Activated CD4-positive, alpha-beta T cell treated with anti-CD3 and anti-CD28 coated beads, Interleukin-2, amount 10 ng/mL, durations not matched to agents 24 days and 14 days (primary cell): ENCODE measurements at regions of chr12 and their contacts with region 1.

Region 1: DNA sequence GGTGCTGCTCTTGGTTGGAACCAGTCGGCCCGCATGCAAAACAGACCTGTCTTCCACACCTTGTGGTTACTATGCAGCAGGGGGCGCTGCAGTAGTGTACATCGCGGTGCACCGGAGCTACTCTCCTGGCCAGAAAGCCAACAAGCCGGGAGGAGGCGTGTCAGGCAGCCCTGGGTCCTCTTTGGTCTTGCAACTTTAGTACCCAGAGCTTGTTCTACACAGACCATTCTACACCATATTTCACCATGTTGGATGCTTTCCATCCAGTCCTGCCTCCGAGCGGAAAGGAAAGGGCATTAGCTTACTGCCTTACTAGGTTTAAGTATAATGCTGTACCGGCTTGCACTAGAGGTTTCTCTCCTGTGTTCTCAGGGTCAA is 927 bp upstream of the TMTC2 start:
- DNase-seq: peak; percentile 97
- H3K4me3 Mint-ChIP-seq: peak overlapping the region; percentile 97
- H3K27ac Mint-ChIP-seq: peak overlapping the region; percentile 89
- H3K4me1 Mint-ChIP-seq: peaks cover 22% of the 10 kb centered on the region
- H3K27me3 Mint-ChIP-seq: peaks cover 24% of the 10 kb centered on the region

Region 2: DNA sequence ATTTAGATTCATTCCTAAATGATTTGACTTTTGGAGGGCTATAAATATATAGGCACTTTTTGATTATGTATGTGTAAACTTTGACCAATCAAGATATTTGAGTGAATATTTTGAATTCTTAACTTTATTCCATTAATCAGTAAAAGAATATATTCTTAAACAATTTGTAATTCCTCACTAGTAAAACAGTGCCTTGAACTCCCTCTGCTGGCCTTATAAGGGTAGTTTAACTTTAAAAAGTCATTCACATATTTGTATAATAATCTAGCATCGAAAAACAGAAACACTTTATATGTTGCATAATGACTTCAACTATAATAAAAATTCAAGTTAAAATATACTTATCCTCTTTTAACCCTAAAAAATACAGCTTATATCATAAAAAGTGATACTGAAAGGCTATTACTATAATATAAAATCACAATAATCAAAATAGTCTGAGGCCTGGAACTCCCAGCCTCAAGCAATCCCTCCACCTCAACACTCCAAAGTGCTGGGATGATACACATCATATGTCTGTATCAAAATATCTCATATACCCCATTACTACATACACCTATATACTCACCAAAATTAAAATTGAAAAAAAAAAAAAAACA is 358.8 kb before region 1 on chr12:
- intact Hi-C with region 1: no loop called
- DNase-seq: no peak
- H3K4me3 Mint-ChIP-seq: no peak overlapping the region
- H3K27ac Mint-ChIP-seq: no peak overlapping the region
- H3K4me1 Mint-ChIP-seq: no peaks in the 10 kb centered on the region
- H3K27me3 Mint-ChIP-seq: no peaks in the 10 kb centered on the region

Region 3: GRCh38 chr12:82358200-82359114 is 327.3 kb before region 1 on chr12 and contains the starts of genes CCDC59 and METTL25:
- intact Hi-C with region 1: loop called (anchors 1 kb)
- DNase-seq: peak; percentile 98
- H3K4me3 Mint-ChIP-seq: peak within 1 kb of the TSS; percentile 97
- H3K27ac Mint-ChIP-seq: peak within 1 kb of the TSS; percentile 100
- H3K4me1 Mint-ChIP-seq: peaks cover 35% of the 10 kb centered on the region
- H3K27me3 Mint-ChIP-seq: no peaks in the 10 kb centered on the region
- total RNA-seq, gene CCDC59: 101 and 102 TPM in 2 replicates
- total RNA-seq, gene METTL25: 6.3 and 7.8 TPM in 2 replicates

Region 4: DNA sequence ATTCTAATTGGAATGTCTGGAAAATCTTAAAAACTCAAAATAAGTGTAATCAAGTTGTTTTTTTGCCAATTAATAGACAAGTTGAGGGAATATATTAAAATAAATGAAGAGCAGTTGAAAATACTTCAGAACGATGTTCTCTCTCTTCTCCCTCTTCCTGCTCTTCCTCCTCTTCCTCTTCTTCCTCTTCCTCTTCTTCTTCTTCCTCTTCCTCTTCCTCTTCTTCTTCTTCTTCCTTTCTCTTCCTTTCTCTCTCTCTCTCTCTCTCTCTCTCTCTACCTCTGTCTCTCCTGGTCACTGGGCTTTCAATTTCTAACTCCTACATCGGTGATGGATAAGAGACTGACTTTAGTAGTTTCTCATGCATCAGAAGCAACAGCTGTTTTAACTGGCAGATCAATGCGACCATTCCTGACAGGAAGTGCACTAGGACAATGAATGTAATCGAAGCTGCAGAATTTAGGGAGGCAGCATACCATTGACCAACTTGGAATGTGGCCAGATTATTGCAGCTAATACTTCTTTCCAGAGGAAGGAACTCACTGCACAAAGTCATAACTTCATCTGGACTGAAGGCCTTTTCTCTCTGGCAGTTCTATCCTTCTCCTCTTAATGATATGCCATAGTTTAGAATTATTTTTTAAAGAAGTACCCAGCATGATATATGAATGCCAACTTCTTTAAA is 12.8 kb before region 1 on chr12:
- intact Hi-C with region 1: no loop called
- DNase-seq: no peak
- H3K4me3 Mint-ChIP-seq: no peak overlapping the region
- H3K27ac Mint-ChIP-seq: no peak overlapping the region
- H3K4me1 Mint-ChIP-seq: no peaks in the 10 kb centered on the region
- H3K27me3 Mint-ChIP-seq: peaks cover 9% of the 10 kb centered on the region

Region 5: GRCh38 chr12:82723093-82723492 is 37.3 kb after region 1 on chr12:
- intact Hi-C with region 1: loop called (anchors 1 kb)
- DNase-seq: no peak
- H3K4me3 Mint-ChIP-seq: no peak overlapping the region
- H3K27ac Mint-ChIP-seq: no peak overlapping the region
- H3K4me1 Mint-ChIP-seq: peaks cover 7% of the 10 kb centered on the region
- H3K27me3 Mint-ChIP-seq: no peaks in the 10 kb centered on the region

Region 6: GRCh38 chr12:83005534-83006197 is 319.9 kb after region 1 on chr12:
- intact Hi-C with region 1: loop called (anchors 10 kb)
- DNase-seq: no peak
- H3K4me3 Mint-ChIP-seq: no peak overlapping the region
- H3K27ac Mint-ChIP-seq: no peak overlapping the region
- H3K4me1 Mint-ChIP-seq: no peaks in the 10 kb centered on the region
- H3K27me3 Mint-ChIP-seq: no peaks in the 10 kb centered on the region

Region 7: DNA sequence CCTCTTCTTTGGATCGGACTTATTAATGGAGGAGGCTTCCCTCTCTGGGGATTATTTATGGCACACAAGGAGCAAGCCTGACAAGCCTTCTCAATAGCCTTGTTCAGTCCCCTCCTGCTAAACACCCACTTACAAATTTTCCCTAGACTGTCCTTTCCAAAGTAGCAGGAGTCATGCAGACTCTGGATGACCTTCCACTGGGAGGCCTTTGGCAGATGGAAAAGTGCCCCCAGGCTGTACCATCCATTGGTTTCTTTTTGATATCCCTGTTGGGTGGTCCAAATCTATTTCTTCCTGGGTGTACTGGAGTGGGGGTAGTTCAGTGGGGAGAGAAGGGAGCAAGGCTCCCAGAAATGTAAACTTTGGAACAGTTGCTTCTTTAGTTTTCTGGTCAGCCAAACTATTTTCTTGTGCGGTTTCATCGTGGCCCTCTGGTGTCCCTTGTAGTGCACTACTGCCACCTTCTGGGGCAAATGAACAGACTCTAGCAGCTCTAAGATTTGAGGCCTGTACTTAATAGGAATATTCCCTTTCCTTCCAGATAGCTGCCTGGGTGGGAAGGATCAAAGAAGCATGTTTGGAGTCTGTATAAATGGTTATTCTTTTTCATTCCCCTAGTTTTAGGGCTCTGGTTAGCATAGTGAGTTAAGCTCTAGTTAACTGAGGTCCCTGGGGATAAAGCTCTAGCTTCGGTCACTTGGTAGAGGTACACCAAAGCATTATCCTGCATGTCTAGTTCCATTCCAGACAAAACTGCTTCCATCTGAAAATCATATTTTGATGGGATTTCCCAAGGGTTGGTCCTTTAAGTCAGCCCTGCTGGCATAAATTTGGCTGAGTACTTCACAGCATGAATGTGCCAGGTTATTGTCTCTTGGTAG is 1817.4 kb after region 1 on chr12:
- intact Hi-C with region 1: loop called (anchors 2 kb)
- DNase-seq: peak; percentile 65
- H3K4me3 Mint-ChIP-seq: no peak overlapping the region
- H3K27ac Mint-ChIP-seq: no peak overlapping the region
- H3K4me1 Mint-ChIP-seq: no peaks in the 10 kb centered on the region
- H3K27me3 Mint-ChIP-seq: no peaks in the 10 kb centered on the region